A673 (cell line): ENCODE measurements at regions of chr13 and their contacts with region 1.

Region 1: DNA sequence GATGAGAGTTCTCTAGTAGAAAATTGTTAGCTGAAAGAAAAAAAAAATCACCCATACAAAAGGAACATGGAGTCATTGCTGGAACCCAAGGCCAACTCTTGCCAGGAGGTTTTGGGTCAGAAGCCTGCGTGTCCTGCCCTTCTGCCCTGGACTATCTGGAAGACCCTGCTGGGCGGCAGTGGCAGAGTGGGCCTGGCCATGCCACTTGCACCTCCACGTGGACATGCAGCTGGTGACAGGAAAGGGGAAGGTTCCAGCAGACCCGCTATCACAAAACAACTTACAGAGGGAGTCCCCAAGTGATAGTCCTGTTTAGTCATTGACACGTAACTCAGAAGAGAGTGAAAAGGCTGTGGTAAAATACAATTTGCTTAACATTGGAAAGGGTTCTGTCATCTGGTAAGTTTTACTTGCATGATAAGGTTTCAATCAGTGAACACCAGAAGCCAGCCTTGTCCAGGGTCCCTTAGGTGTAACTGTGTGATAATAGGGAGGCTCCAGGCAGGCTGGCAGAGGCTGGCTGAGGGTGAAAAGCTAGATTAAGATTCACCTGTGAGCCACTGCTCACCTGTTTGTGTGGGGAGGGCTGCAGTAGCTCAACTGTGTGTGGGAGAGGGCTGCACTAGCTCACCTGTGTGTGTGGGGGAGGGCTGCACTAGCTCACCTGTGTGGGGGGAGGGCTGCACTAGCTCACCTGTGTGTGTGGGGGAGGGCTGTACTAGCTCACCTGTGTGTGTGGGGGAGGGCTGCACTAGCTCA is 47.8 kb downstream of the COL4A2 start:
- DNase-seq: no peak
- H3K4me3 ChIP-seq: no peak overlapping the region
- H3K27ac ChIP-seq: no peak overlapping the region
- H3K4me1 ChIP-seq: peaks cover 6% of the 10 kb centered on the region
- H3K27me3 ChIP-seq: no peaks in the 10 kb centered on the region
- CTCF ChIP-seq: no peak

Region 2: DNA sequence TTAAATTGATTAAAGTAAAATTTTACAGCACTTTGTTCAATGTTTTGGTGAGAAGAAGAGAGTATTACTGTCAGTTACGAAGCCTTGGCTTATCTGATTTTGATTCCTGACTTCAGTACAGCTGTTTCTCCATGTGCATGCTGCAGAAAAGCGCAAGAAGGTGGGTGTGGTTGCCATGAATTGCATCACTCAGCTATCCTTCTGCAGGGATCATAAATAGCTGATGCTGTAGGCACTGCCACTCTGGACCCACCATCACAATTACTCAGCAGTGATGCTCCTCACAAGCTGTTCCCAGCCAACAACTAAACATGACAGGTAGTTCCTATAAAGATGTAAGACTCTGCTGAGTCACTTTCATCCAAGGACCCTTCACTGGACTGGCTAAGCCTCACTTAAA is 889.7 kb before region 1 on chr13:
- CTCF ChIA-PET with region 1: no interaction called
- POLR2A ChIA-PET with region 1: no interaction called
- intact Hi-C with region 1: no loop called
- DNase-seq: peak; percentile 19
- H3K4me3 ChIP-seq: no peak overlapping the region
- H3K27ac ChIP-seq: no peak overlapping the region
- H3K4me1 ChIP-seq: peaks cover 4% of the 10 kb centered on the region
- H3K27me3 ChIP-seq: no peaks in the 10 kb centered on the region
- CTCF ChIP-seq: no peak

Region 3: GRCh38 chr13:110197046-110197445 is 157.8 kb before region 1 on chr13:
- CTCF ChIA-PET with region 1: no interaction called
- POLR2A ChIA-PET with region 1: no interaction called
- intact Hi-C with region 1: no loop called
- DNase-seq: no peak
- H3K4me3 ChIP-seq: no peak overlapping the region
- H3K27ac ChIP-seq: no peak overlapping the region
- H3K4me1 ChIP-seq: no peaks in the 10 kb centered on the region
- H3K27me3 ChIP-seq: no peaks in the 10 kb centered on the region
- CTCF ChIP-seq: no peak

Region 4: GRCh38 chr13:110343241-110343865 is 11.5 kb before region 1 on chr13:
- CTCF ChIA-PET with region 1: interaction called, 10 read pairs
- POLR2A ChIA-PET with region 1: no interaction called
- intact Hi-C with region 1: no loop called
- DNase-seq: no peak
- H3K4me3 ChIP-seq: no peak overlapping the region
- H3K27ac ChIP-seq: no peak overlapping the region
- H3K4me1 ChIP-seq: peaks cover 28% of the 10 kb centered on the region
- H3K27me3 ChIP-seq: no peaks in the 10 kb centered on the region
- CTCF ChIP-seq: no peak